A549 (cell line): ENCODE measurements at regions of chr12 and their contacts with region 1.

Region 1: DNA sequence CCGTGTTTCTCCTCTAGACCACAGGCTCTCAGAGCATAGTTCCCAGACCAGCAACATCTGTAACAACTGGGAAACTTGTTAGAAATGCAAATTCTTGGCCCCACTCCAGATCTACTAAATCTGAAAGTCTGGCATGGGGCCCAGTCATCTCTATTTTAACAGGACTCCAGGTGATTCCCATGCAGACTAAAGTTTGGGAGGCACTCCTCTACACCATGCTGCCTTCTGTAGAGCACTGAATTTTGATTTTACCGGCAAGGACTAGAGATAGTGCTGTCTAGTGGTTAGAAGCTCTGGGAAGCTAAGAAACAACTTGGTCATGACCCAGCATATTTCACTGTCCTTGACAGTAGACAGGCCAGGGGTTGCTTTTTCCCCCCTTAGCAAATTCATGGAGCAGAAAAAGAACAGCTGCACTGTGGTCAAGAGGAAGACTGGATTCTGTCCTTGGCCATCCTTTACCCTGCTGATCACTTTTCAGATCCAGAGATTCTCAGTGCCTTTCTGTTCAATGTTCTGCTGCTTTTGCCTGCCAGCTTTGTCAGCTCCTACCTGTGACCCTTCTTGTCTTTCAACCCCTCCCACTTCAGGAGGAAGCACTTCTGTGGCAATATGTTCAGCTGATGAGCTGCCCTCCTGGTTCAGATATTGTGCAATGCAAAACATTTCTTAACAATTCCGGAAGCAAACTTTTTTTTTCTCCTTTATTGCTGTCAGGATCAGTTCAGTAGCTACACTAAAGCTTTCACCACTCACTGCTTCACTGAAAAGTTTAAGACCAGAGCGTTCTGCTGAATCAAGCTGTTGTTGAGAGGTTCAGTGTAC is 133.8 kb upstream of the NUDT4 start:
- DNase-seq: peak in 1 of 2 experiments; percentile 42
- ATAC-seq: peak; percentile 42 to 54; a peak in 5 of 6 replicates
- H3K4me3 ChIP-seq: no peak overlapping the region
- H3K27ac ChIP-seq: peak overlapping the region; percentile 21 to 31; a peak in 3 of 6 replicates
- H3K4me1 ChIP-seq: peaks cover 11% of the 10 kb centered on the region; the same call in 2 of the 3 replicates
- CTCF ChIP-seq: no peak
- EP300 ChIP-seq: no peak
- POLR2A ChIP-seq: no peak
- RAD21 ChIP-seq: no peak

Region 2: DNA sequence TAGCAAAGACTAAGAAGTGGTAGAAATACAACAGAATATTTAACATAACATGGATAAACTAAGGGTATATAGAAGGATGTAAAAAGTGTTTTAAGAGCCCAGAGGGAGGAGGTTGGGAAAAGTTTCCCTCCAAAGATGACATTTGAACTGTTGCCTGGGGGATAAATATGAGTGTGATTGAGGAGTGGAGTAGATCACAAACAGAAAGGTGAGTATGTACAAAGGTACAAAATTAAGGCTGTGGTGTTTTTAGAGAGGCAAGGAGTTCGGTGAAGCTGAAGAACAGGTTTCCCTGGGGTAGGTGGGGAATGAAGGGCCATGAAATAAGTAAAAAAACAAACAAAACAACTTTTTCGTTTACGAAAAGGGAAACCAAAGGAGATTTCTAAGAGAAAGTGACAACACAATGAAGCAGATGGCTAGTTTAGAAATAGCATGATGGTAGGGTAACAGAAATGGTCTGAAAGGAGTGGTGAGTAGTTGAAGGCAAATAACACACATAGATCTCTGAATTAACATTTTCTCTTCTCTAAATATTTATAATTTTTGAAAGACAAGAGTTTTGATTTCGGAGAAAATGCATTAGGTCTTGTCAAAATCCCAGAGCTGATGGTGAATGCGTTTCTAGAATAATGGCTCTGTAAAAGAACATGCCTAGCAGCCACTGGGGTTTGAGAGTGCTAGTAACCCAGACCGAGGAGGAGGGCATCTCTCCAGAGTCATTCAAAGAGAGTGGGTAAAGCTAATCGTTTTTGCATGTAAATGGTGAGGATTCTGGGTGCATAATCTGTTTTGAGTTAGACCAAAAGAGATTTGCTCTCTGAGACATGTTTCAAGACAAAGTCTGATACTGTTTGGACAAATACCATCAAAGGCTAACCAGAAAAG is 1820.9 kb before region 1 on chr12:
- CTCF ChIA-PET with region 1: no interaction called
- POLR2A ChIA-PET with region 1: no interaction called
- DNase-seq: no peak
- ATAC-seq: no peak
- H3K4me3 ChIP-seq: no peak overlapping the region
- H3K27ac ChIP-seq: no peak overlapping the region
- H3K4me1 ChIP-seq: no peaks in the 10 kb centered on the region; the same call in 2 of the 3 replicates
- CTCF ChIP-seq: no peak
- EP300 ChIP-seq: no peak
- POLR2A ChIP-seq: no peak
- RAD21 ChIP-seq: no peak

Region 3: GRCh38 chr12:93146263-93146939 is 97.5 kb before region 1 on chr12:
- CTCF ChIA-PET with region 1: no interaction called
- POLR2A ChIA-PET with region 1: no interaction called
- DNase-seq: no peak
- ATAC-seq: no peak
- H3K4me3 ChIP-seq: no peak overlapping the region
- H3K27ac ChIP-seq: no peak overlapping the region
- H3K4me1 ChIP-seq: no peaks in the 10 kb centered on the region
- CTCF ChIP-seq: no peak
- EP300 ChIP-seq: no peak
- POLR2A ChIP-seq: no peak
- RAD21 ChIP-seq: no peak

Region 4: DNA sequence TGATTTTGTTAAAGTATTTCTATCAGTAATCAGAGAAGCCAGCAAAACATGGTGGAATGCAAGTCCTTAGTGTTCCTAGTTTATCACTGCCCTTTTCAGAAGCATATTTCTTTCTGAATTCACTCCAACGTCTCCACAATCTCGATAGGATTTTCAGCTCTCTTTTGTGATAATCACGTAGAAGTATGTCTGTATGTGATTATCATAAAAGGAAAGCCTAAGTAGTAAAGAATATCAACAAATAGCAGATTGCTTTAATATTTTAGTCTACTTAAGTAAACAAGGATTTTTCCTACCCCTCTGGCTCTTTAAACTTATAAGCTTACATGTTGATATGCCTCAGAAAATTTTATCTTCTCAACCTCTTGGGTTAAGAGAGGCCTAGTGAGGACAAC is 13.6 kb before region 1 on chr12:
- CTCF ChIA-PET with region 1: interaction called, 13 read pairs
- POLR2A ChIA-PET with region 1: no interaction called
- DNase-seq: no peak
- ATAC-seq: no peak
- H3K4me3 ChIP-seq: no peak overlapping the region
- H3K27ac ChIP-seq: peak overlapping the region; percentile 14 to 65; a peak in 3 of 6 replicates
- H3K4me1 ChIP-seq: peaks cover 13% of the 10 kb centered on the region; the same call in 2 of the 3 replicates
- CTCF ChIP-seq: no peak
- EP300 ChIP-seq: no peak
- POLR2A ChIP-seq: no peak
- RAD21 ChIP-seq: no peak